Activated CD8-positive, alpha-beta memory T cell treated with anti-CD3 and anti-CD28 coated beads, Interleukin-2, amount 10 ng/mL, durations not matched to agents 7 days and 5 days (primary cell): ENCODE measurements at regions of chr11 and their contacts with region 1.

Region 1: GRCh38 chr11:30128269-30128932 is 102.4 kb upstream of the FSHB start:
- DNase-seq: no peak
- ATAC-seq: no peak
- H3K4me3 Mint-ChIP-seq: no peak overlapping the region
- H3K27ac Mint-ChIP-seq: no peak overlapping the region
- H3K4me1 Mint-ChIP-seq: no peaks in the 10 kb centered on the region
- H3K27me3 Mint-ChIP-seq: no peaks in the 10 kb centered on the region

Region 2: GRCh38 chr11:30143098-30143705 is 14.8 kb after region 1 on chr11:
- CTCF ChIA-PET with region 1: interaction called, 38 read pairs
- DNase-seq: no peak
- ATAC-seq: no peak
- H3K4me3 Mint-ChIP-seq: no peak overlapping the region
- H3K27ac Mint-ChIP-seq: no peak overlapping the region
- H3K4me1 Mint-ChIP-seq: no peaks in the 10 kb centered on the region
- H3K27me3 Mint-ChIP-seq: peaks cover 3% of the 10 kb centered on the region

Region 3: DNA sequence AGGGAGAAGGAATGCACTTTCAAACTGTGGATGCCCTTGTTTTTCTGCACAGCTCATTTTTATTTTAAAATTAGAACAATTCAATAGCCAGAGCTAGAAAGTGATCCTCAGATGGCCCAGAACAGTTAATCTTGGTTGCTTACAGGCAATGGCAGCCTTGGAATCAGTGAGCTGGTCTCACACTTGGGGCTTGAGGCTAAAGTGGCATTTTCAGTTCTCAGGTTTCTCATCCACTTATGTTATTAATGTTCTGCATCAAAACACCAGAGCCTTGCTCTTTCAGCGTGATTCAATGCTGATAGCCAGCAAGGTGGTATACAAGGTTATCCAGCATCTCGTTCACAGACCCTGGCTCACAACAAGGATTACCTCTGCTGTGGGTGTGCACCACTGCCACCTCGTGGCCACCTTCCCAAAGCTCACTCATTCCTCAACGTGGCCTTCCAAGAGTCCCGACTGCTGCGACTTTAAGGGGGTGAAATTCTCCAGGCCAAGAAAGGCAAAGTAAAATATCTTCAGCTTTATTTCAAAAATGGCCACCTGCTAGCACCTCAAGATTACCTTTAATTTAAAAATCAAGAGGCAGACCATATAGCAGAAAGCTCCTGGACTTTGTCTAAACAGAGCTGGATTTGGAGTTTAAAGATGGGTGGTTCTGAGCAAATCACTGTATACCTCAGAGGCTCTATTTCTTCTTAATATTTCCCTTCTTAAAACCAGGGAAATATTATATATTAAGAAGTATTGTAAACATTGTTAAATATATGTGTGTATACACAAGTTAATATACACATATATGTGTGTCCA is 68.2 kb after region 1 on chr11:
- CTCF ChIA-PET with region 1: interaction called, 12 read pairs
- DNase-seq: peak; percentile 56
- ATAC-seq: peak; percentile 68
- H3K4me3 Mint-ChIP-seq: no peak overlapping the region
- H3K27ac Mint-ChIP-seq: no peak overlapping the region
- H3K4me1 Mint-ChIP-seq: no peaks in the 10 kb centered on the region
- H3K27me3 Mint-ChIP-seq: no peaks in the 10 kb centered on the region

Region 4: GRCh38 chr11:30314625-30315024 is 186.2 kb after region 1 on chr11:
- CTCF ChIA-PET with region 1: interaction called, 14 read pairs
- DNase-seq: no peak
- ATAC-seq: no peak
- H3K4me3 Mint-ChIP-seq: no peak overlapping the region
- H3K27ac Mint-ChIP-seq: no peak overlapping the region
- H3K4me1 Mint-ChIP-seq: peaks cover 15% of the 10 kb centered on the region
- H3K27me3 Mint-ChIP-seq: peaks cover 11% of the 10 kb centered on the region

Region 5: GRCh38 chr11:30889143-30889794 is 760.9 kb after region 1 on chr11:
- CTCF ChIA-PET with region 1: no interaction called
- DNase-seq: no peak
- ATAC-seq: no peak
- H3K4me3 Mint-ChIP-seq: no peak overlapping the region
- H3K27ac Mint-ChIP-seq: no peak overlapping the region
- H3K4me1 Mint-ChIP-seq: no peaks in the 10 kb centered on the region
- H3K27me3 Mint-ChIP-seq: no peaks in the 10 kb centered on the region